Activated B cell treated with CpG ODN at 0.5 μM for 24 hours (primary cell): ENCODE measurements at regions of chr9 and their contacts with region 1.

Region 1: GRCh38 chr9:127159325-127159801 is 36.9 kb upstream of the ANGPTL2 start:
- DNase-seq: no peak
- ATAC-seq: no peak
- H3K4me3 Mint-ChIP-seq: no peak overlapping the region
- H3K27ac Mint-ChIP-seq: no peak overlapping the region
- H3K4me1 Mint-ChIP-seq: peaks cover 29% of the 10 kb centered on the region
- H3K27me3 Mint-ChIP-seq: no peaks in the 10 kb centered on the region
- CTCF ChIP-seq: no peak

Region 2: DNA sequence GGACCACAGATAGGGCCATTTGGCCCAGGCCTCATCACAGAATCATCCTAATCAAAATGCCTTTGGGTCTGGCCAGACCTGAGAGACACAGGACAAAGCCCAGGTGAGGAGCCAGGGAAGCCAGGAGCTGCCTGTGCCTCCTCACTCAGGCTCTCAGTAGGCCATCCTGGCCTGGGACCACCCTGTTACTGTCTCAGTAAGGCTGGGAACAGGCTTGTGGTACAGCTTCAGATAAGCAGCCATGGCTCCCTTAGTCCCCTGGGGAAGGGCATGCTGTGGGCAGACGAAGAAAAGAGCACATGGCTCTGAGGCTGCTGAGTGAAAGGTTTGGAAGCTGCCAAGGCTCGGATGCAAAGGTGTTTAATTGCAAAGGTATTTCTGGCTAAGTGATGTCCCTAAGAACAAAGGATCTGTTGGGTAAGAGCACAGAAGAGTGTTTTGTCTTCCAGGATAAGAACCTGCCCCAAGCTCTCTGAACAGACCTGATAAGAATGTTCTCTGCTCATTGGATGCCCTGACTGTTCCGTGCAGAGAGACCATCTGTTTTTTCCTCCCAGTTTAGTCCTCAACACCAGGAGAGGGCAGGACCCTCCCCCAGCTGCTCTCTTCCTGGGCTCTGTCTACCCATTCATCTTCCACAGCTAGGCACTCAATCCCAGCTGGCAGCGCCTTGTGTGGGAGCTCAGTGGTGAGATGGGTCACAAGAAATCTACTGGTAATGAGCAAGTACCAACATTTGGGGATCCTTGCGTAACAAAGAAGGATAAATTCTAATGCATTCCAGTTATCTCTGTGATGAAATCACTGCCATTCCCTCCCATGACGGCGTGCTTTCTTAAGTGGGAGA is 54.7 kb before region 1 on chr9:
- CTCF ChIA-PET with region 1: no interaction called
- POLR2A ChIA-PET with region 1: no interaction called
- intact Hi-C with region 1: no loop called
- DNase-seq: no peak
- ATAC-seq: no peak
- H3K4me3 Mint-ChIP-seq: no peak overlapping the region
- H3K27ac Mint-ChIP-seq: no peak overlapping the region
- H3K4me1 Mint-ChIP-seq: no peaks in the 10 kb centered on the region
- H3K27me3 Mint-ChIP-seq: no peaks in the 10 kb centered on the region
- CTCF ChIP-seq: no peak

Region 3: GRCh38 chr9:127122176-127123063 is 36.9 kb before region 1 on chr9 and contains the start of gene ANGPTL2:
- CTCF ChIA-PET with region 1: no interaction called
- POLR2A ChIA-PET with region 1: no interaction called
- intact Hi-C with region 1: loop called (anchors 1 kb)
- DNase-seq: peak; percentile 29
- ATAC-seq: peak; percentile 80
- H3K4me3 Mint-ChIP-seq: peak within 1 kb of the TSS; percentile 19
- H3K27ac Mint-ChIP-seq: no peak within 1 kb of the TSS
- H3K4me1 Mint-ChIP-seq: peaks cover 29% of the 10 kb centered on the region
- H3K27me3 Mint-ChIP-seq: peaks cover 5% of the 10 kb centered on the region
- CTCF ChIP-seq: no peak
- total RNA-seq, gene ANGPTL2: not detected in 2 replicates